HepG2 (cell line): ENCODE measurements at regions of chr1 and their contacts with region 1.

Region 1: GRCh38 chr1:161382214-161383019 is 14.7 kb upstream of the CFAP126 start:
- DNase-seq: peak; percentile 48
- ATAC-seq: peak; percentile 83
- H3K4me3 ChIP-seq: no peak overlapping the region
- H3K27ac ChIP-seq: no peak overlapping the region
- H3K4me1 ChIP-seq: peaks cover 25% of the 10 kb centered on the region
- H3K27me3 ChIP-seq: no peaks in the 10 kb centered on the region
- CTCF ChIP-seq: peak; percentile 69
- EP300 ChIP-seq: no peak
- POLR2A ChIP-seq: no peak
- RAD21 ChIP-seq: peak; percentile 52; the same call in 1 of the 2 replicates

Region 2: GRCh38 chr1:161192476-161193465 is 189.6 kb before region 1 on chr1:
- CTCF ChIA-PET with region 1: interaction called, 15 read pairs
- POLR2A ChIA-PET with region 1: no interaction called
- in situ Hi-C with region 1: loop called (anchors 5 kb)
- intact Hi-C with region 1: loop called (anchors 1 kb)
- DNase-seq: peak; percentile 72
- ATAC-seq: peak; percentile 85
- H3K4me3 ChIP-seq: no peak overlapping the region
- H3K27ac ChIP-seq: no peak overlapping the region
- H3K4me1 ChIP-seq: peaks cover 30% of the 10 kb centered on the region
- H3K27me3 ChIP-seq: no peaks in the 10 kb centered on the region
- CTCF ChIP-seq: peak; percentile 92
- EP300 ChIP-seq: no peak
- POLR2A ChIP-seq: no peak
- RAD21 ChIP-seq: peak; percentile 79